ENCODE measurements at regions of chr16 and their contacts with region 1.

Region 1: DNA sequence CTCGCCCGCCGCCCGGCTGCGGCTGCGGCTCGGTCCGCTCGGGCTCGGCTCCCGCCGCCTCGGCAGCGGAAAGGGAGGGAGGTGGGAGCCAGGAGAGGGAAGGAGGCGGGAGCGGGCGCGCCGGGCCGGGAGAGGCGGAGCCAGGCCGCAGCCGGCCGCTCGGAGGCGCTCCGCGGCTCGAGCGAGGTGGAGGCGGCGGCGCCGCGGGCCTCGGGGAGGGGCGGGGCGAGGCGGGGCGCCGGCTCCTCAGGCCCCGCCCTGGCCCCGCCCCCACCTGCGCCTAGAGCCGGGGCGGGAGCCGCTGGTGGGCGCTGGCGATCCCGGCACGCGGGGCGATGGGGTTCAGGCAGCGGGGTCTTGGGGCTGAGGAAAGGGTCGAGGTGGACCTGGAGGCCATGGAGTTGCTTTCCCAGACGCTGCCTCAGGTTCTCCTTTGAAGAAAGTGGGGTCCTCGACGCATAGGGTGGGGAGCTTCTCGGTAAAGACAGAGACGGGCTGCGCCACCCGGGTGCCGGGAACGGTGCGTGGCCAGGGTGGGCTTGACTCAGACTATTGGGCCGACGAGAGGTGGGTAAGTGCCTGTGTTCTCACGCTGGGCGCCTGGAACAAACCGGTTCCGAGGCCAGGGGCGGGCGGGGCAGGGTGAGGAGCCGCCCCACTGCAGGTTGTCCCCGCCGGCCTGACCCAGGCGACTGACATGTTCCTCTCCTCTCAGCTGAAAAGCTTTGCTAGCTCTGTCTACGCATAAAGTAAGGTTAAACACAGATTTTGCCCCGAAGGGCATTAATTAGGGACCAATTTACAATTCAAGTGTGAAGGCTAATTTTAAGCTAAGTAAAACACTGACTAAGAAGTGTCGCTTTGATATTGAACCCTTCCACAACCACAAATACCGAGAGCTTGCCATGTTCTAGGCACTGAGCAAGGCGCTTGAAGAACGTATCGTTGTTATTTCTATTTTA is at the start of gene CMTM4:
- H3K4me3 ChIP-seq: peak within 1 kb of the TSS; percentile 75
- H3K27ac ChIP-seq: peak within 1 kb of the TSS; percentile 77; the same call in 1 of the 2 replicates
- H3K4me1 ChIP-seq: peaks cover 11% of the 10 kb centered on the region; the same call in 1 of the 2 replicates
- CTCF ChIP-seq: peak; percentile 79

Region 2: DNA sequence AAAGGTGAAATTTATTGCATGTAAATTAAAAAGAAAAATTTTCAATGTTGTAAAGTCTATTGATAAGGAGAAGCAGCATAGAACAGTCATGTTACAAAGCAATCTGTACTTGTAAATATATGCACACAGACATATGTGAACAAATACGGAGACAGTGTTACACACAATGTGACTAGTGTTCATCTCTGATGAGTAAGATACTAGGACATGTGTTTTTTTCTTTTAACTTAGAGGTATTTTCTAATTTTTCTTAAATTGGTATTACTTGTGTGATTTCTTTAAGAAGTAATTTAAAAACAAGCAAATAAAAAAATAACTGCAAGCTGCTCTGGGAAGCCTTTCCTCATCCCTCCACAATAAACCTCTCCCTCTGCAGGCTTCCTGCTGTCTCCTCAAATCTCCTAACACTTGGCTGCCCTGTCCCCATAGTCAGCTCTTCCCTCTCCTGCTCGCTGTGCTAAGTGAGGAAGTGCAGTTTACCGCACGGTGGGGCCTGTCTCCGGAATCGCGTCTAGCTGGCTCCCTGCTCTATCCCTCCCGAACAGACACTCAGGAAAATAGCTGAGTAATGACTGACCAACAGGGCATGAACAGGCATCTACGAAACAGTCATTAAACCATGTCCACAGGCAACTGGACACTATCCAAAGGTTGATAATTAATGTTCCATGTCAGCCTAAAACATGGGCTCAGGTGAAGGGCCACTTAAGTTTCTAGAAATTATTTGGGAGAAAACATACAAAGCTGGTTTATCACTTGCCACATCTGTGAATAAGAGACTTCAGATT is 36.3 kb before region 1 on chr16:
- CTCF ChIA-PET with region 1: interaction called, 22 read pairs
- POLR2A ChIA-PET with region 1: interaction called, 9 read pairs
- H3K4me3 ChIP-seq: no peak overlapping the region
- H3K27ac ChIP-seq: no peak overlapping the region
- H3K4me1 ChIP-seq: peaks cover 18% of the 10 kb centered on the region
- CTCF ChIP-seq: peak; percentile 69